ENCODE measurements at regions of chr6 and their contacts with region 1.

Region 1: GRCh38 chr6:53556986-53557715 is 12.2 kb upstream of the GCLC start:
- DNase-seq: no peak

Region 2: GRCh38 chr6:53573299-53573698 is 16.1 kb after region 1 on chr6:
- intact Hi-C with region 1: loop called in 1 of 2 experiments (anchors 1 kb)
- DNase-seq: no peak

Region 3: DNA sequence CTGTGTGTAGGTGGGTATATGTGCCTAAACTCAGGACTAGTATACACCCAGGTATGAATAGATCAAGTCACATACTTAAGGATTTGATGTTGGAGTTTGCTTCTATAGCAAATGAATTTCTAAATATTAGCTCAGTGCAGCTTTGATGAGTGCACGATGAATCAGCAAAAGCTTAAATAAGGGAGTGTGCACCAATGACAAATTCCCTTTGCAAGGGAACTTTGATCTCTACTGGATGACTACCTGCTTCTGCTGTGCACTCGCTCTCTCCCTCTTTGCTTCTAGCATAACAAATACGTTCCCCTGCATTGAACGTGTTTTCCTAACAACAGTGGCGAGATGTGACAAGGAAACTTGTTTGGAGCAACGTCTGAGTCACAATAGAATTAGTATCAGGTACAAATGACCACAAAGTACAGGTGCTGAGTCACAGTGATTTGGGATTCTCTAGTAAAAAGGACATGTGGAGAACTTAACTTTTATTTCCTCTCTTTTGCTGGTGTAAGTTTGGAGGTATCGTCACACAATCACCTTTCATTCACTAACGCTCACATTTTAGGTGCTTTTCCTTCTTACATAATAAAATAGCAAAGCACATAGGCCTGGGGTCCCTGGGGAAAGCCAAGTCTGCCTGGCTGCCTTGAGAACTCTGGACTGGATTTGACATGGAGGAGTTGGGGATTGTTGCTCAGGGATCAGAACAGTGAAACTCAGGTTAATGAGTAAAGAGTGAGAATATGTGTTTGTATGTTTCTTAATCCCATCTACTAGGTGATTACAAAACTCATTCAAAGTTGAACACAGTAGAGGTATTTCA is 58.7 kb after region 1 on chr6:
- intact Hi-C with region 1: no loop called
- DNase-seq: no peak